GM12878 (cell line): ENCODE measurements at regions of chr12 and their contacts with region 1.

Region 1: GRCh38 chr12:130871286-130872178 is at the start of gene RAN:
- DNase-seq: peak; percentile 67
- ATAC-seq: peak; percentile 76
- H3K4me3 ChIP-seq: peak within 1 kb of the TSS; percentile 98
- H3K27ac ChIP-seq: peak within 1 kb of the TSS; percentile 93
- H3K4me1 ChIP-seq: peaks cover 7% of the 10 kb centered on the region
- H3K27me3 ChIP-seq: no peaks in the 10 kb centered on the region
- CTCF ChIP-seq: no peak
- EP300 ChIP-seq: no peak
- POLR2A ChIP-seq: peak; percentile 91
- RAD21 ChIP-seq: no peak
- polyA plus RNA-seq, gene RAN: 3,131 to 3,633 TPM

Region 2: DNA sequence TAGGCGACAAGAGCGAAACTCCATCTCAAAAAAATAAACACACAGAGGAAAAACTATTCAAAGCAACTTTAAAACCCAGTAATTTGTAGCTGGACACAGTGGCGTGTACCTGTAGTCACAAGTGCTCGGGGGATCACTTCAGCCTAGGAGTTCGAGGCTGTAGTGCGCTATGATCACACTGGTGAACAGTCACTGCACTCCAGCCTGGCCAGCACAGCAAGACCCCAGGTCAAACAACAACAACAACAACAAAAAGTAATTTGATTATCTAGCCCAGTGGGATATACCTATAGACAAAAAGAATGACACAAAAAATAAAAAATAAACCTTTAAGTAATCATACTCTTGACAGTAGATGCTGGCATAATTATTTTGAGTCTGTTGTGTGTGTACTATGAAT is 61.7 kb before region 1 on chr12:
- CTCF ChIA-PET with region 1: no interaction called
- POLR2A ChIA-PET with region 1: no interaction called
- RAD21 ChIA-PET with region 1: no interaction called
- SMC1A ChIA-PET with region 1: no interaction called
- in situ Hi-C with region 1: no loop called
- intact Hi-C with region 1: no loop called
- DNase-seq: no peak
- ATAC-seq: no peak
- H3K4me3 ChIP-seq: no peak overlapping the region
- H3K27ac ChIP-seq: no peak overlapping the region
- H3K4me1 ChIP-seq: peaks cover 14% of the 10 kb centered on the region
- H3K27me3 ChIP-seq: no peaks in the 10 kb centered on the region
- CTCF ChIP-seq: no peak
- EP300 ChIP-seq: no peak
- POLR2A ChIP-seq: no peak
- RAD21 ChIP-seq: no peak

Region 3: GRCh38 chr12:130826149-130826801 is 45.3 kb before region 1 on chr12:
- CTCF ChIA-PET with region 1: interaction called, 7 read pairs
- POLR2A ChIA-PET with region 1: no interaction called
- RAD21 ChIA-PET with region 1: interaction called, 13 read pairs
- SMC1A ChIA-PET with region 1: interaction called, 5 read pairs
- in situ Hi-C with region 1: no loop called
- intact Hi-C with region 1: no loop called
- DNase-seq: no peak
- ATAC-seq: peak; percentile 95
- H3K4me3 ChIP-seq: no peak overlapping the region
- H3K27ac ChIP-seq: no peak overlapping the region
- H3K4me1 ChIP-seq: no peaks in the 10 kb centered on the region; the same call in 1 of the 2 replicates
- H3K27me3 ChIP-seq: no peaks in the 10 kb centered on the region
- CTCF ChIP-seq: peak; percentile 49 to 81 (median 69)
- EP300 ChIP-seq: no peak
- POLR2A ChIP-seq: no peak
- RAD21 ChIP-seq: peak; percentile 37; the same call in 1 of the 2 replicates

Region 4: DNA sequence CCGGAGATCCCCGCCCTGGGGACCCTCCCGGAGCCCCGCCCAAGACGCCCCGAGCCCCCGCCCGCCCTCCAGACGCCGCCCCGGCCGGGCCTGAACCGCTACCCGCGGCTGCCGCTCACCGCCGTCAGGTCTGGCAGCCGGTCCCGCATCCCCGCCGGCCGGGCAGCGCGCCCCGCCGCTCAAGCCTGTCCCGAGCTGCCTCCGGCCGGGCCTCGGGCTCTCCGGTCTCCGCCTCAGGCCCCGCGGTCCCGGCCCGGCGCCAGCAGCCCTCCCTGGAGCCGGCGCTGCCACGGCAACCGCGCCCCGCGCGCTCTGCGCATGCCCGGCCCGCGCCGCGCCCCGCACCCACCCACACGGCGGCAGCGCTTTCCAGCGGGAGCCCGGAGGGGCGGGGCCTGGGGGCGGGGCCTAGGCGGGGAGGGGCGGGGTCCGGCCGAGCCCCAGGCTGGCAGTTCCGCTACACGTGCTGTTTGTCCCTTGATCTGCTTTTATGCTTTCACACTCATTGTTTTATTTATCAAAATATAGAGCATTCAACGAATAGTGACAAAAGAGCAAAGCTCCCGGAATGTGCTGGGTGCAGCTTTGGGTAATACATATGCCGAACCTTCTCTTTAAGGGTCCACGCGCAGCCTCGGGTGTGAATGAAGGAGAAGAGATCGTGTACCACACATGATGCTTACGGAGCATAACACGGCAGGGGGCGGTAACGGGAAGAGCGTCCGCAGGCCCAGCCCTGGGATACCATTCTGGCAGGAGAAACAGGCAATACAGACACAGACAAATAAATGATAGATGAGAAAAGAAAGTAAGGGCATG is 32.4 kb before region 1 on chr12 and contains the start of gene STX2:
- CTCF ChIA-PET with region 1: interaction called, 4 read pairs
- POLR2A ChIA-PET with region 1: interaction called, 5 read pairs
- RAD21 ChIA-PET with region 1: no interaction called
- SMC1A ChIA-PET with region 1: no interaction called
- in situ Hi-C with region 1: no loop called
- intact Hi-C with region 1: loop called (anchors 5 kb)
- DNase-seq: peak; percentile 30
- ATAC-seq: peak; percentile 92
- H3K4me3 ChIP-seq: peak within 1 kb of the TSS; percentile 87
- H3K27ac ChIP-seq: no peak within 1 kb of the TSS; the same call in 1 of the 2 replicates
- H3K4me1 ChIP-seq: peaks cover 5% of the 10 kb centered on the region
- H3K27me3 ChIP-seq: no peaks in the 10 kb centered on the region
- CTCF ChIP-seq: no peak
- EP300 ChIP-seq: no peak
- POLR2A ChIP-seq: no peak
- RAD21 ChIP-seq: no peak
- polyA plus RNA-seq, gene STX2: 6.0 to 7.8 TPM

Region 5: DNA sequence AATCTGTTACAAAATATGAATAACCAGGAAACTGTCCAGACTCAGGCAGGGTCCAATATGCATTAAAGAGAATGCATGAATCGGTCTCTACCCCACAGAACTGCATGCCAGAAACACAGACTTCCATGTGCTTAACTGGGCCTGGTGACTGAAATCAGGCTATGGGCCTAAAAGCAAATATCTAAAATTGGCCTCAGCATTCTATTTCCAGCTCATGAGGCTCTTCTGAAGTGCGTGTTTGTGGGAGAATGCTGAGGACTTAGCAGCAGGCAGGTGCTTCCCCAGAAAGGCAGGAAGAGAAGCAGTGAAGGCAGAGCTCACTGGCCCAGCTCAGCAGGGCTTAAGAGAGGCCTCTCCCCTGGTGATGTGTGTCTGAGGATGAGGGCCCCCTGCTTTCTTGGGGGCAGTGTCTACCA is 130.7 kb after region 1 on chr12:
- CTCF ChIA-PET with region 1: interaction called, 3 read pairs
- POLR2A ChIA-PET with region 1: interaction called, 5 read pairs
- RAD21 ChIA-PET with region 1: interaction called, 4 read pairs
- SMC1A ChIA-PET with region 1: interaction called, 3 read pairs
- in situ Hi-C with region 1: no loop called
- intact Hi-C with region 1: loop called (anchors 5 kb)
- DNase-seq: peak; percentile 60
- ATAC-seq: peak; percentile 92
- H3K4me3 ChIP-seq: no peak overlapping the region
- H3K27ac ChIP-seq: peak overlapping the region; percentile 9
- H3K4me1 ChIP-seq: peaks cover 14% of the 10 kb centered on the region
- H3K27me3 ChIP-seq: no peaks in the 10 kb centered on the region
- CTCF ChIP-seq: no peak
- EP300 ChIP-seq: peak in 1 of 2 experiments; percentile 84; a peak in 2 of 4 replicates
- POLR2A ChIP-seq: peak; percentile 61; the same call in 1 of the 2 replicates
- RAD21 ChIP-seq: peak; percentile 13; the same call in 1 of the 2 replicates